MCF 10A (cell line): ENCODE measurements at regions of chr19 and their contacts with region 1.

Region 1: GRCh38 chr19:57279418-57280066 is 743 bp upstream of the ZNF460 start:
- DNase-seq: peak; percentile 99
- H3K4me3 Mint-ChIP-seq: no peak overlapping the region
- H3K27ac Mint-ChIP-seq: no peak overlapping the region
- H3K4me1 Mint-ChIP-seq: peaks cover 12% of the 10 kb centered on the region
- H3K27me3 Mint-ChIP-seq: no peaks in the 10 kb centered on the region
- CTCF ChIP-seq: no peak

Region 2: DNA sequence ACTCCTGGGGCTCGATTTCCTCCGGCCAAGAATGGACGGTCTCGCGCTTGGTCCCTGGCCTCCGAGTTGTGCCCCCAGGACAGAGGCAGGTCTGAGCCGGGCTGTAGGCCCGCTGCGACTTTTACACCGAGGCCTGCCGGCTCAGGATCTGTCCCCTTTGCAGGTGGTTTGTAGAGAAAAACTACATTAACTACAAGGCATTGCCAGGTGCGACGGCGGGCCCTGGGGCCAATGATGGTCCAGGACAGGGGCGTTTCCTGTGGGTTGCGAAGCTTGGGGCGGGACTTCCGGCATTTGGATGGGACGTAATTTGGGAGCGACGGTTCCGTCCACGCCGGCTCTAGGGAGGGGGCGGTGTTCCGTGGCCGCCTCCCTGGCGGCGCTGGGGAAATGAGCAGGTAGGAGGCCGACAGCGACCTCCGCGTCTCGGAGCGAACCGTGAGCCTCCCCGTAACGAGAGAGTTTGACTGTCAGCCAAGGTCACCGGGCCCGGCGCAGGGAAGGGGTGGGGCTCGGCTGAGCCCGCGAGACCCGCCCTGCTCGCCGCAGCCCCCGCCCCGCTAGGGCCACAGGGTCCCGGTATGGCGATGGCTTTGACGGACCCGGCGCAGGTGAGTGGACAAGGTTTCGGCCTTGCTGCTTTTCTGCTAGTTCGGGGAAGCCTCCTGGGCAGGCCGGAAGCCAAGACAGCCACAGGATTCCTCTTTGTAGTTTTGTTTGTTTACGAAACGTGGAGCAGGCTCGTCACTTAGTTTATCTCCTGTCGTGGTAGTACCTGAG is 39.0 kb before region 1 on chr19 and contains the start of gene ZNF805:
- CTCF ChIA-PET with region 1: interaction called, 4 read pairs
- POLR2A ChIA-PET with region 1: interaction called, 7 read pairs
- intact Hi-C with region 1: loop called (anchors 1 kb)
- DNase-seq: peak; percentile 95
- H3K4me3 Mint-ChIP-seq: peak within 1 kb of the TSS; percentile 73
- H3K27ac Mint-ChIP-seq: peak within 1 kb of the TSS; percentile 70
- H3K4me1 Mint-ChIP-seq: peaks cover 6% of the 10 kb centered on the region
- H3K27me3 Mint-ChIP-seq: no peaks in the 10 kb centered on the region
- CTCF ChIP-seq: no peak
- total RNA-seq, gene ZNF805: 11.8 and 12.2 TPM in 2 replicates

Region 3: DNA sequence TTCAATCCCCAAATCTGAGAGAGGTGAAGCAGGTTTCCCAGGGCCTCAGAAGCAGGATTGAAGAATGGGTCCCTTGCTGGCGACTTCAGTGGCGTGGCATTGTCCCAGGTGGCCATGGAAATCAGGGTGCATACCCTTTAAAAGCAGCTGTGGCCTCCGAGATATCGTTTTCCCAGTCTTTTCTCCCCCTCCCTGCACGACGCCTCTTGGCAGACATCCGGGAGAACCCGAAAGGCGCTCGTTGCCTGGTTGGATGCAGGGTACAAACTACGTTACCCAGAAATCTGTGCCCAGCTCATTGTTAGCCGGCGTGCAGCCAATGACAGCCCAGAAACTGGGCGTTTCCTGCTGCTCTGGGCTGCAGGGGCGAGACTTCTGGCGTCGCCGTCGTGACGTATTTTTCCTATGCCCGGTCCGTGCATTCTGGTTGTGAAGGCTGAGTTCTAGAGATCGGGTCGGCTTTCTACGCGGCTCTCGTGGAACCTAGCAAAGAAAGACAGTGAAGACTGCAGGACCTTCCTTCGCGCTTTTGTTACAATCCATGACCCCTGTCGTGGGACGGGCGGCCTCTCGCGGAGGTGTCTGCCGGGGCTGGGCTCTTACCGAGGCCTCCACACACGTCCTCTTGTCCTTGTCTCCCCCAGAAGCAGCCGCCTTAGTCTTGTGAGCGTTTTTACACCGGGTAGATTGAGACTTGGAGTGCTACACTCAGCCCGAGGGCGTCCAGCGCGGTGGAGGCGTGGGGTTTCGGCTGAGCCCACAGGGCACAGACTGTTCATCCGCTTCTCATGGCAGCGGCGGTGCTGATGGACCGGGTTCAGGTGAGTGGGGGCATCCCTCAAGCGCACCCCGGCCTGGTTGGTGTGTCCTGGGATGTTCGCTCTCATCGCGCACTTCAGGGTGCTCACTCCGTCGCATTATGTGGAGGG is 71.6 kb after region 1 on chr19 and contains the start of gene ZNF304:
- CTCF ChIA-PET with region 1: interaction called, 3 read pairs
- POLR2A ChIA-PET with region 1: interaction called, 5 read pairs
- intact Hi-C with region 1: loop called (anchors 2 kb)
- DNase-seq: peak; percentile 98
- H3K4me3 Mint-ChIP-seq: peak within 1 kb of the TSS; percentile 90
- H3K27ac Mint-ChIP-seq: peak within 1 kb of the TSS; percentile 97
- H3K4me1 Mint-ChIP-seq: peaks cover 21% of the 10 kb centered on the region
- H3K27me3 Mint-ChIP-seq: no peaks in the 10 kb centered on the region
- CTCF ChIP-seq: no peak
- total RNA-seq, gene ZNF304: 7.0 and 9.9 TPM in 2 replicates